Brain microvascular endothelial cell (primary cell): ENCODE measurements at regions of chr1 and their contacts with region 1.

Region 1: DNA sequence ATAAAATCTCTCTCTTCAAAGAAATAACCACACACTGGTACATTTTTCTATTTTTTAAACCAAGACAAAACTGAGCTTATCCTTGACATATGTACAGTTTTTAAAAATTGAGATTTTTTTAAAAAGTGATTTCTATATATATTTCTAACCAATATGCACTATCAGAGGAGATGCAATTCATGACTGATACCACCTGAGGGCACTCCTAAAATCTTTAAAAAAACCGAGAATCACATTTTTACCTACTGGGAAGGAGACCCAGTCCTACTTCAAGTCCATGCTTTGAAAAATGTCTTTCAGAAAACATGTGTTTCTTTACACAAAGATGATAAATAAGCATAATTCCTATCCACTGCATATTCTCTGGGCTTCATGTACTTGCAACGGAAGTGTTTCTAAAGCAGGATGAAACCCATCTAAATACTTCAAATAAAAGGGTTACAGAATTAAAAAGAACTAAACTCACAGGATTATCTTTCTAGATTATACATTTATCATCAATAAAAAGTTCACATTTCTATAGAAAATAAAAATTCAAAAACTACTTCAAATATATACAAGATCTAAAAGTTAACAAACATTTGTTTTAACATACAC is 98.6 kb downstream of the ENAH start:
- DNase-seq: no peak
- H3K4me3 ChIP-seq: no peak overlapping the region
- H3K27ac ChIP-seq: no peak overlapping the region
- H3K27me3 ChIP-seq: no peaks in the 10 kb centered on the region
- CTCF ChIP-seq: peak; percentile 50

Region 2: GRCh38 chr1:225772323-225772768 is 218.0 kb after region 1 on chr1:
- in situ Hi-C with region 1: loop called (anchors 25 kb)
- DNase-seq: peak; percentile 81
- H3K4me3 ChIP-seq: no peak overlapping the region
- H3K27ac ChIP-seq: no peak overlapping the region
- H3K27me3 ChIP-seq: no peaks in the 10 kb centered on the region
- CTCF ChIP-seq: peak; percentile 96

Region 3: DNA sequence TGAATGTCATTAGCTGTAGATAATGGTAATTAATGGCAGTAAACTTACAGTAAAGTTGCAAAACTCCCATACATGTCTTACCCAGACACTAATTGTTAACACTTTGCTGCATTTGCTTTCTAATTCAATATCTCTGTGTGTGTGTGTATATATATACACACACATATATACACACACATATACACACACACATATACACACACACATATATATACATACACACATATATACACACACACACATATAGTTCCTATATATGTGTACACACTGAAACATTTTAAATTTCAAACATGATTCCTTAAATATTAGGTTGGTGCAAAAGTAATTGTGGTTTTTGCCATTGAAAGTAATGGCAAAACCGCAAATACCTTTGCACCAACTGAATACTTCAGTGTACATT is 251.9 kb after region 1 on chr1:
- in situ Hi-C with region 1: no loop called
- DNase-seq: no peak
- H3K4me3 ChIP-seq: no peak overlapping the region
- H3K27ac ChIP-seq: no peak overlapping the region
- H3K27me3 ChIP-seq: no peaks in the 10 kb centered on the region
- CTCF ChIP-seq: no peak